Colonic mucosa (tissue), 4 donors: ENCODE measurements at regions of chr1 and their contacts with region 1.

Region 1: DNA sequence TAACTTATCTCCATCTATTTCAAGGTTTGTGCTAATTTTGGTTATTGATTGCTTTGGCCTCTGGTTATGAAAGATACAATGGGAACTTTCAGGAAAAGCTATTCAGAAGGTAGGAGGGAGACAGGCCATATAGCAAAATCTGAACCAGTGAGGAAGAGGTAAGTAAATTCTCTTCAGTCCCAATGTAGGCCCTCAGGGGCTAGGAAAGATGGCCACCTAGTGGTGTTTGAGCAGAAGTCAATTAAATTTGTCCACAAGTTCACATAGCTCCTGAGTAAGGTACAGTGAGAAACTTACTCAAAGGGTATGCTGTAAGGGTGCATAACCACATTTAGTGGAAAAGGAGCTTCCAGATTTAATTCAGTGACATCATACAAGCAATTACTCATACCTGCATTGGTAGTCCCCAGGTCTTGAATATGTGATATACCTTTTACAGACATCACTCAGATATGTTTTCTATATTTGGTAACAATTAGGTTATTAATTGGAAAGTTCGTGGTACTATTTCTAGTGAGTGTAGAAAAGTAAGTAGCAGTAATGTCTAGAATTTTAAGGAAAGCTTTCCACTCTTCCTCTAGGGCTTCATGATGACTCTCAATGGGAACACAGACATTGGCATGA is 21.4 kb upstream of the FMO1 start:
- DNase-seq: peak; percentile 48
- H3K4me3 ChIP-seq: no peak overlapping the region
- H3K27ac ChIP-seq: no peak overlapping the region
- H3K4me1 ChIP-seq: no peaks in the 10 kb centered on the region
- H3K27me3 ChIP-seq: no peaks in the 10 kb centered on the region
- CTCF ChIP-seq: peak; percentile 69

Region 2: DNA sequence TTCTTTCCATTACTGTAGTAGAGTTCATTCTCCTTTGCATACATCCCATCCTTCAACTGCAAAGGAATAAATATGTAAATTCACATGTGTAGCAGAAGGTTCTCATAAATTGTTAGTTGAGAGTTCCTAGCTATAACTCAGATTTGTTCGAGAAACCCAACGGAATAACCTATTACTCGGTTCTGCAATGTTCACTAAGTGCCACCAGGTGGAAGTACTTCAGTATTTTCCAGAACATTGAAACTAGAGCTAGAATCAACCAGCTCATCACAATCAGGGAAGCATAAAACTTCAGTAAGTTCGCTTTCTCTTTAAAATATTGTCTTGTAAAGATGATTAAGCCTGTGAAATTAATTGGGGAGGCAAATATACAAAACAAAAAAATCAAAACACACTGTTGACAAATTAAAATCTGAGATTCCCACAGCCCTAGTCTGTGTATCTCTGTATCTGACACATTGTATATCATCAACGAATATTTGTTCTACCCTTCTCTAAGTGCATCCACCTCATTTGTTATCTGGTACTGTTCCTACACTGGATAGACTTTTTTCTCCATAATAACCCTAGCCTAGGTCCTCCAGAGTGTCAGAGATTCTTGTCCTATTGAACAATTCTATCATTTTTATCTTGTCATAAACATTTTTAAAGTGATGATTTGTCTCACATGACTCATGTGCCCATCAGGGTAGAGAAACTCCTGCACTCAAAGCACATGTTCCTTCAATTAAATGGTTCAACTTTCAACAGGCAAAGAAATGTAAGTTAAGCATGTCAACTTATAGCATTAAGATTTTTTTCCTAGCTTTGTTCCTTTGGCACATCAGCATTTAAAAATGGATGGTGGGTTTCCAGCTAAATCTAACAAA is 259.6 kb before region 1 on chr1:
- intact Hi-C with region 1: loop called (anchors 5 kb)
- DNase-seq: no peak
- H3K4me3 ChIP-seq: no peak overlapping the region
- H3K27ac ChIP-seq: no peak overlapping the region
- H3K4me1 ChIP-seq: no peaks in the 10 kb centered on the region
- H3K27me3 ChIP-seq: no peaks in the 10 kb centered on the region
- CTCF ChIP-seq: peak; percentile 50

Region 3: DNA sequence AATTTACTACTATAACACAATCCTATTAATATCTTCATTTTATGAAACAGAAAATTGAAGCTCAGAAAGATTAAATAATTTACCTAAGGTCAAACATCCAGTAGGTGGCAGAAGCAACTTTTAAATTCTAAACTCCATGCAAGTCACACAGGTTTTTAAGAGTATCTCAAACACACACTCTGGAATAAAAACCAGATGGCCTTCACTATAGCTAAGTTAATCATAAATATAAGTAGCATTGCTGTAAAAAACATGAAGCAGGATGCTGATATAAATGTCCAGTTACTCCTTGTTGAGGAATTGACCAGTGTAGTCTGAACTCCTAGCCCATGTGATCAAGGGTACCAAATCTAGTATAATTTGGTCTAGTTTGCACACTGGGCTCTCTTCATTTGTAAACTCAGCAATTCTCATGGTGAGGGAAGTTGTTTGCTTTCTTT is 145.5 kb before region 1 on chr1:
- intact Hi-C with region 1: loop called (anchors 5 kb)
- DNase-seq: no peak
- H3K4me3 ChIP-seq: no peak overlapping the region
- H3K27ac ChIP-seq: no peak overlapping the region
- H3K4me1 ChIP-seq: no peaks in the 10 kb centered on the region
- H3K27me3 ChIP-seq: no peaks in the 10 kb centered on the region
- CTCF ChIP-seq: peak; percentile 23

Region 4: GRCh38 chr1:171188388-171189266 is 38.2 kb before region 1 on chr1:
- intact Hi-C with region 1: no loop called
- DNase-seq: peak; percentile 61
- H3K4me3 ChIP-seq: no peak overlapping the region
- H3K27ac ChIP-seq: no peak overlapping the region
- H3K4me1 ChIP-seq: no peaks in the 10 kb centered on the region
- H3K27me3 ChIP-seq: no peaks in the 10 kb centered on the region
- CTCF ChIP-seq: peak; percentile 73

Region 5: DNA sequence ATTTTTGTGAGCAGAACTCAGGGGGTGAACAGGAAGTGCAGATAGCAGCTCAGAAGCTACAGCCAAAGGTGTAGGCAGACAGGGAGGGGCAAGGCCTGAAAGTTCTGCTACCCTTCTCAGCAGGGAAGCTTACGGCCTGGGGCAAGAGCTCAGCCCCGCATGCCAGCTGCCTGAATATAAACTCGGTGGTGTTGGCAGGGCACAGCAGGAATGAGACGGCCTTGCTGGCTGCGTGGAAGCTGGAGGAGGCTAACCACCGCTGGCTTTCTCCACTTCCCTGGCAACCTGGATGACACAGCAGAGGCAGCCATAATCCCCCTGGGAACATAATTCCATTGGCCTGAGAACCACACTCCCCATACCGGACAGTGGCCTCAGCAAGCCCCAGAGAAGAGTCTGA is 176.5 kb after region 1 on chr1:
- intact Hi-C with region 1: no loop called
- DNase-seq: no peak
- H3K4me3 ChIP-seq: no peak overlapping the region
- H3K27ac ChIP-seq: no peak overlapping the region
- H3K4me1 ChIP-seq: no peaks in the 10 kb centered on the region
- H3K27me3 ChIP-seq: no peaks in the 10 kb centered on the region
- CTCF ChIP-seq: no peak